K562 (cell line): ENCODE measurements at regions of chr15 and their contacts with region 1.

Region 1: DNA sequence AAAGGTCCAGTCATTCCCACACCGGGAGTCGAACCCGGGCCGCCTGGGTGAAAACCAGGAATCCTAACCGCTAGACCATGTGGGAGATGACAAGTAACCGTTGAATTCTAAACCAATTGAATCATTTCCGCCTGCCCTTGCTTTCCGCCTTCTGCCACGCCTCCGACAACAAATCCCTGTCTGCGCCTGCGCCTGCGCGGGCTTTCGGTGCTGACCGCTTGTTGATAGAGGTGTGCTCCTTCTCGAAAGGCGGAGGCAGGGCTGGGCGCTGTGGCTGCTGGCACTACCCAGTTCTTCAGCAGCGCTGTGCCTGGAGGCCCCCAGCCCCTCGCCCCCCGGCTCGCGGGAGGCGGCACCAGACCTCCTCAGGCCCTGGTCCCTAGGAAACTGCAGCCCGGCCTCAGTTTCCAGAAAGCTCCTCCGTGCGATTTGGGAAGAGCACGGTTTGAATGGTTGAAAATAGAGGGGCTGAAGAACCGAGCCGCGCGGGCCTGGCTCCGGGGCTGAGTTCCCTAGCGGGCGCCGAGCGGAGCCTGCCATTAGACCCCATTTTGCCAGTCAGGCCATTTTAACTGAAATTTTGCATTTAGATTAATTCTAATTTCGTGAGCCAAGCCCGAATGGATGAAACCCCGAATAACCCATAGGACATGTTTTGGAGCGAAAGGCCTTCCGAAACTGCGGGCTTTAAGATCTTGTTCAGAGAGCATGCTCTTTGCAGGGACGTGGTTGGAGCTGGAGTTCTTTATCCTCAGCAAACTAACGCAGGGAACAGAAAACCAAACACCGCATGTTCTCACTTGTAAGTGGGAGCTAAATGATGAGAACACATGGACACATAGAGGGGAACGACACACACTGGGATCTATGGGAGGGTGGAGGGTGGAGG is 219.3 kb upstream of the ATP10A start:
- DNase-seq: peak; percentile 91 to 94 (median 94)
- ATAC-seq: peak; percentile 98
- H3K4me3 ChIP-seq: peak overlapping the region; percentile 56
- H3K27ac ChIP-seq: peak overlapping the region; percentile 60
- H3K4me1 ChIP-seq: peaks cover 0 to 4% of the 10 kb centered on the region in 2 experiments; a peak in 3 of 5 replicates
- H3K27me3 ChIP-seq: no peaks in the 10 kb centered on the region
- CTCF ChIP-seq: no peak
- EP300 ChIP-seq: peak; percentile 76
- POLR2A ChIP-seq: peak; percentile 79
- RAD21 ChIP-seq: no peak

Region 2: DNA sequence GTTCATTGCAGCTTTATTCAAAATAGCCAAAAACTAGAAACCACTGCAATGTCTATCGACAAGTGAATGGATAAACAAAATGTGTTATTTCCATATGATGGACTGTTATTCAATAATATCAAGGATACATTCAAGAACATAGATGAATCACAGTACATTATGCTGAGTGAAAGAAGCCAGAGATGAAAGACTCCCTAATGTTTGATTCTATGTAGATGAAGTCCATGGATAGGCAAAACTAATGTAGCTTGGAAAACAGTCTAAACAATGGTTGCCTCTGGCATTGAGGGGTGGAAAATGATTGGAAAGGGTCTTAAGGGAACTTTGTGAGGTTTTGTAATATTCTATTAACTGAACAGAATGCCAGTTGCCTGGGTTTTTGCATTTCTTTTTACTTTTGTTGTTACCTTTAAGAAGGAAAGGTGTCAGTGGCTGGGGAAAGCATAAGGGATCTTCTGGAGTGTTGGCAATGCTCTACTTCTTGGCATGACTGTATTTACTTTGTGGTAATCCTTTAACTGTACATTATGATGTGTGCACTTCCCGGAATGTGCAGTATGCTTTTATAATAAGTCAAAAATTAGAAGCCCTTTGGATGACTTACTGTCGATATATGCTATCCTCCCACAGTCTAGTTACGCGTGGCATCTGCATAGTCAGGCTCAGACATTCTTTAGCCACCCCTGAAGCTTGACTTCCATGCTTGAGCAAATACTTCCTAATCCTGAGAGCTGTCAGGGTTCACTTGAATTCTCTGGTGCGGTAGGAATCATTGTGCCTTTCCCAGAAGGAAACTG is 198.8 kb before region 1 on chr15:
- CTCF ChIA-PET with region 1: no interaction called
- POLR2A ChIA-PET with region 1: no interaction called
- in situ Hi-C with region 1: no loop called
- intact Hi-C with region 1: no loop called
- DNase-seq: no peak
- ATAC-seq: no peak
- H3K4me3 ChIP-seq: no peak overlapping the region
- H3K27ac ChIP-seq: no peak overlapping the region
- H3K4me1 ChIP-seq: no peaks in the 10 kb centered on the region
- H3K27me3 ChIP-seq: no peaks in the 10 kb centered on the region
- CTCF ChIP-seq: no peak
- EP300 ChIP-seq: no peak
- POLR2A ChIP-seq: no peak
- RAD21 ChIP-seq: no peak

Region 3: DNA sequence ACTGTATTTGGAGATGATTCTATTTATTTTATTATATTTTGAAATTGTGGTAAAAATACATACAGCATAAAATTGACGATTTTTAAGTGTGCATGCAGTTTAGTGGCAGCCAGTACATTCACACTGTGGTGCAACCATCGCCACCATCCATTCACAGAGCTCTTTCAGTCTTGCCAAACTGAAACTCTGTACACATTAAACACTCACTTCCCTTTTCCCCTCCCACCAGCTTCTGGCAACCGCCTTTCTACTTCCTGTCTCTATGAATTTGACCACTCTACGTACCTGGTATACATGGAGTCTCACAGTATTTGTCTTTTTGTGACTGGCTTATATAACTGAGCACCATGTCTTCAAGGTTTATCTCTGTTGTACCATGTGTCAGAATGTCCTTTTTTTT is 84.0 kb after region 1 on chr15:
- CTCF ChIA-PET with region 1: interaction called, 12 read pairs
- POLR2A ChIA-PET with region 1: no interaction called
- in situ Hi-C with region 1: no loop called
- intact Hi-C with region 1: no loop called
- DNase-seq: no peak
- ATAC-seq: peak; percentile 42; the same call in 1 of the 3 replicates
- H3K4me3 ChIP-seq: no peak overlapping the region
- H3K27ac ChIP-seq: no peak overlapping the region
- H3K4me1 ChIP-seq: no peaks in the 10 kb centered on the region
- H3K27me3 ChIP-seq: no peaks in the 10 kb centered on the region
- CTCF ChIP-seq: no peak
- EP300 ChIP-seq: no peak
- POLR2A ChIP-seq: no peak
- RAD21 ChIP-seq: no peak